Sciatic nerve (tissue), 2 donors: ENCODE measurements at regions of chr18 and their contacts with region 1.

Region 1: GRCh38 chr18:52730972-52731619 is 391.1 kb downstream of the DCC start:
- DNase-seq: no peak
- ATAC-seq: no peak

Region 2: DNA sequence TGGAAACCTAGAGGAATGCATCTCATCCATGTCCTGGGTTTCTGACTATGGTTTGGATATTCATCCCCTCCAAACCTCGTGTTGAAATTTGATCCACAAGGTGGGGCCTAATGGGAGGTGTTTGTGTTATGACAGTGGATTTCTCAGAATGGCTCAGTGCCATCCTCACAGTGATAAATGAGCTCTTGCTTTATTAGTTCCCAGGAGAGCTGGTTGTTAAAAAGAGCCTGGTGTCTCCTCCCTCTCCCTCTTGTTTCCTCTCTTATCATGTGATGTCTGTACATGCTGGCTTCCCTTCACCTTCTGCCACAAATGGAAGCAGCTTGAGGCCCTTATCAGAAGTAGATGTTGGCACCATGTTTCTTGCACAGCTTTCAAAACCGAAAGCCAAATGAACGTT is 33.2 kb after region 1 on chr18:
- intact Hi-C with region 1: loop called (anchors 1 kb)
- DNase-seq: no peak
- ATAC-seq: no peak

Region 3: DNA sequence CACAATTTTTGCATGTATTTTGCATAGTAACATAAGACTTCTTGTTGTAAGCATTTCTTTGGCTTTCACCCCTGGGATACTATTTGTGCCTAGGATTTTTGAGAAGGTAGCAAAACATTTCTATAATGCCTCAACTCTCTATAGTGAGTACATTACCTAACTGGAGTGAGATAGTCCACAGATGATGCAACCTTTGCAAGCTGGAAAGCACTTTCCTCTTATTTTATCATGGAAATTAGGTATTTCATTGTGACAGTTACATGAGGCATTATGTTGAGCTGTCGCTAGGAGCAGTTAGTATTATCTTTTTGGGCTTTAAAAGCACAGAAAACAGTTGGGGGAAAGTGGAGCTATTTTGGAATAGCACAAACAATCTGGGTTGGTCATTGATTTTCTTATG is 395.1 kb after region 1 on chr18:
- intact Hi-C with region 1: no loop called
- DNase-seq: no peak
- ATAC-seq: no peak